ENCODE measurements at regions of chr17 and their contacts with region 1.

Region 1: GRCh38 chr17:7931709-7932482 is at the starts of genes CNTROB and TRAPPC1:
- DNase-seq: peak; percentile 97 to 100 (median 99)
- ATAC-seq: peak; percentile 98
- H3K4me3 ChIP-seq: peak within 1 kb of the TSS; percentile 66
- H3K4me3 Mint-ChIP-seq: peak within 1 kb of the TSS; percentile 95 to 100 (median 96)
- H3K27ac ChIP-seq: peak within 1 kb of the TSS; percentile 88
- H3K27ac Mint-ChIP-seq: peak within 1 kb of the TSS; percentile 82 to 99 (median 96)
- H3K4me1 ChIP-seq: peaks cover 20 to 28% of the 10 kb centered on the region in 2 donors
- H3K4me1 Mint-ChIP-seq: peaks cover 31 to 60% (median 54%) of the 10 kb centered on the region in 7 donors
- H3K27me3 ChIP-seq: no peaks in the 10 kb centered on the region
- H3K27me3 Mint-ChIP-seq: no peaks in the 10 kb centered on the region
- total RNA-seq, gene CNTROB: 29.0 to 50.5 (median 33.6) TPM
- total RNA-seq, gene TRAPPC1: 71.4 to 216 (median 103) TPM

Region 2: DNA sequence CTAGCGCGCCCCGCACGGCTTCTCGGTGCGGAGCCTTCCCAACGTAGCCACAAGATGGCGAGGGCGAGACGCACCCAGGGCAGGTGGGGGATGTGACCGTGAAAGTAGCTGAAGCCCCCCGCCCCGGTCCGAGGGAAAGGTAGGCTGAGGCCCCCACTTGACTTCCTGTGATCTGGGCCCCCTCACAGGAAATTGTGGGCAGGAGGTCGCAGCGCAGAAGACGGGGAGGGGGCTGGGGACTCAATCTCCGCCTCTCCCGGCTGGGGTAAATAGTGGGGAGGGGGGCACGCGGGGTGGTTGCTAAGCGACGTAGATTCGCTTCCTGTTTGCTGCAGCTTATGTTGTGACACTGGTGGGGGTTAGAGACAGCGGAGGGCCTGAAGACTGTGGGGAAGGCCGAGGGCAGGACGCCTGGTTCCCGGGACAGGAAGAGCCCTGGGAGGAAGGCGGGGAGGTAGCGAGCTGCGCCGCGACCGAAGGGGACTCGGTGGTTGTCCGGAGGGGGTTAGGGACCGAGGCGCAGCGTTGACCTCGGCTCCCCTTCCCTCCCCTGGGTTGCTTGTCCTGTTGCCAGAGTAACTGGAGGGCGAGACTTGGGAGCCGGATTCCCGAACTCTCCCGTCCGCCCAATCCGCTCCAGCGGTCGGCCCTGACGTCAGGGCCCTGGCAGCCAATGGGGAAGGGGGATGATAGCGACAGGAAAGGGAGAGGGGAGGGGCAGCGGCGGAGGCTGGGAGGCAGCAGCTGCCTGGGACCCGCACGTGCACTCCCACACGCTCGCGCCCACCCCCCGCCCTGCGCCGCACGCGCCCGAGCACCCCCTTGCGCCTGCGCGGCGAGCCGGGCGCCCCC is 96.7 kb before region 1 on chr17:
- CTCF ChIA-PET with region 1: no interaction called
- POLR2A ChIA-PET with region 1: interaction called, 4 read pairs
- intact Hi-C with region 1: loop called in 1 of 2 experiments (anchors 2 kb)
- DNase-seq: peak; percentile 76 to 97 (median 95)
- ATAC-seq: peak; percentile 70
- H3K4me3 ChIP-seq: peak overlapping the region; percentile 96
- H3K4me3 Mint-ChIP-seq: peak overlapping the region; percentile 91 to 99 (median 96)
- H3K27ac ChIP-seq: peak overlapping the region; percentile 96
- H3K27ac Mint-ChIP-seq: peak overlapping the region; percentile 95 to 100 (median 99)
- H3K4me1 ChIP-seq: peaks cover 29 to 38% of the 10 kb centered on the region in 2 donors
- H3K4me1 Mint-ChIP-seq: peaks cover 28 to 60% (median 44%) of the 10 kb centered on the region in 7 donors
- H3K27me3 ChIP-seq: no peaks in the 10 kb centered on the region
- H3K27me3 Mint-ChIP-seq: peaks cover 0 to 28% (median 0%) of the 10 kb centered on the region in 5 donors

Region 3: GRCh38 chr17:7951143-7951803 is 19.4 kb after region 1 on chr17:
- CTCF ChIA-PET with region 1: no interaction called
- POLR2A ChIA-PET with region 1: no interaction called
- intact Hi-C with region 1: loop called in 1 of 2 experiments (anchors 2 kb)
- DNase-seq: peak in 3 of 9 donors; percentile 13 to 35 (median 14)
- ATAC-seq: peak; percentile 63
- H3K4me3 ChIP-seq: no peak overlapping the region
- H3K4me3 Mint-ChIP-seq: peak overlapping the region in 8 of 10 donors; percentile 16 to 59 (median 36)
- H3K27ac ChIP-seq: no peak overlapping the region
- H3K27ac Mint-ChIP-seq: peak overlapping the region; percentile 59 to 92 (median 81)
- H3K4me1 ChIP-seq: no peaks in the 10 kb centered on the region
- H3K4me1 Mint-ChIP-seq: peaks cover 4 to 22% (median 7%) of the 10 kb centered on the region in 7 donors
- H3K27me3 ChIP-seq: no peaks in the 10 kb centered on the region
- H3K27me3 Mint-ChIP-seq: no peaks in the 10 kb centered on the region

Measured in naive thymus-derived CD4-positive, alpha-beta T cell (primary cell).